ENCODE measurements at regions of chr12 and their contacts with region 1.

Region 1: GRCh38 chr12:120562906-120563305 is 18.3 kb downstream of the POP5 start:
- DNase-seq: no peak
- H3K4me3 Mint-ChIP-seq: no peak overlapping the region
- H3K27ac Mint-ChIP-seq: peak overlapping the region; percentile 7
- H3K4me1 Mint-ChIP-seq: no peaks in the 10 kb centered on the region
- H3K27me3 Mint-ChIP-seq: no peaks in the 10 kb centered on the region

Region 2: GRCh38 chr12:120610560-120610959 is 47.7 kb after region 1 on chr12:
- intact Hi-C with region 1: loop called (anchors 1 kb)
- DNase-seq: no peak
- H3K4me3 Mint-ChIP-seq: no peak overlapping the region
- H3K27ac Mint-ChIP-seq: no peak overlapping the region
- H3K4me1 Mint-ChIP-seq: no peaks in the 10 kb centered on the region
- H3K27me3 Mint-ChIP-seq: peaks cover 2% of the 10 kb centered on the region

Region 3: GRCh38 chr12:120686690-120687577 is 124.0 kb after region 1 on chr12 and contains the start of gene MLEC:
- intact Hi-C with region 1: no loop called
- DNase-seq: peak; percentile 100
- H3K4me3 Mint-ChIP-seq: peak within 1 kb of the TSS; percentile 88
- H3K27ac Mint-ChIP-seq: peak within 1 kb of the TSS; percentile 86
- H3K4me1 Mint-ChIP-seq: peaks cover 48% of the 10 kb centered on the region
- H3K27me3 Mint-ChIP-seq: no peaks in the 10 kb centered on the region
- total RNA-seq, gene MLEC: 139 and 150 TPM in 2 replicates

Measured in activated T-helper 1 cell treated with anti-CD3 and anti-CD28 coated beads, Interleukin-12 subunit alpha, Interleukin-12 subunit beta, Interleukin-2, Interleukin-4 antibody, amounts not matched to agents 30 ng/mL and 10 ng/mL and 1 ng/mL, durations not matched to agents 14 hours and 24 hours and 36 hours (primary cell).